HepG2 (cell line): ENCODE measurements at regions of chr1 and their contacts with region 1.

Region 1: DNA sequence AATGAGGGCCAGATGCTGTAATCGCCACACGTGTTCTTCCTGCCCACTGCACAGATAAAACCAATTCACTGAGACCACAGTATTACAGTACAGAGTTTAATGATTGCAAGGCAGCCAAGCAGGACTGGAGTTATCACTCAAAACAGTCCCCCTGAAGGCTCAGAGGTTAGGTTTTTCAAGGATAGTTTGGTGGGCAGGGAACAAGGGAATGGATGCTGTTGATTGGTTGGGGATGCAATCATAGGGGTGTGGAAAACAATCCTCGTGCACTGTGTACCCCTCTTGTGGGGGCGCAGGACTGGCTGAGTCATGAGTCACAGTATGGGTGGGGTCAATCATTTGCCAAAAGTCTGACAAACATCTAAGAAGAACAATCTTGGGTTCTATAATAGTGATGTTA is 12.4 kb upstream of the USP1 start:
- DNase-seq: peak; percentile 76
- ATAC-seq: peak; percentile 84
- H3K4me3 ChIP-seq: peak overlapping the region in 2 of 3 experiments; percentile 25 to 51; a peak in 1 of 6 replicates
- H3K27ac ChIP-seq: peak overlapping the region; percentile 83
- H3K4me1 ChIP-seq: peaks cover 49% of the 10 kb centered on the region
- H3K27me3 ChIP-seq: no peaks in the 10 kb centered on the region
- CTCF ChIP-seq: no peak
- EP300 ChIP-seq: peak in 1 of 2 experiments; percentile 19; a peak in 1 of 4 replicates
- POLR2A ChIP-seq: peak in 1 of 2 experiments; percentile 59; a peak in 1 of 4 replicates
- RAD21 ChIP-seq: no peak

Region 2: DNA sequence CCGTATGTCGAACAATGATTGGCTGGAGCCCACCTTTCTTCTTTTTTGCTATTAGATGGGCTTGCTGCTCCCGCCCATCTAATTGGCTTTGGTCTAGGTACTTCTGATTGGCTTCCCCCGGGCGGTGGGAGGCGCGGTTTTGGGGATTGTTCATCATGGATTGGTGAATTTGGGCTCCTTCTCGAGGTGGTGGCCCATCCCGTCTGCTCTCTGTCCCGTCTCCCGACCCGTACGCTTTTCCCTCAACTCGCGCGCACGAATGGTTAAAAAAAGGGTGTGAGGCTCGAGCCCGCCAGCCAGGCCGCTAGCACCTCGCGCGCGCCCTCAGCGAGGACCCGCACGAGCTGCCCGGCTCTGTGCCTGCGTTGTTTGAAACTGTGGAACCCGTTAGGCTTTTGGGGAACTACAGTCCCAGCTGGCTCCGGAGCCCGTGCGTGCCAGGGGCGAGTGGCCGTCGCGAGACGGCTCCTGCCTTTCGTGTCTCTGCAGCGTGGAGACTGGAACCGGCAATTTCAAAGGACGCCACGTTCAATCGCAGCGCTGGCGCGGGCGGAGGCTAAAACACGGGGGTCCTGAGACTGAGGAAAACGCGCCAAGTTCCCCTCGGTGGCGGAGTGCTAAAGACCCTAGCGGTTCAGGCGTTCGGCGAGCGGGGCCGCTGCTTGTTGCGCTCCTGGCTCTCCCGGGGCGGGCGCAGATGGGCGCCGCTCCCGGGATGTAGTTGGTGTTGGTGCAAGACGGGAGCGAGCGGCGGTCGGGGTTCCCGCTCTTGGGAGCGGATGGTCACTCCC is 12.2 kb after region 1 on chr1 and contains the start of gene USP1:
- CTCF ChIA-PET with region 1: no interaction called
- POLR2A ChIA-PET with region 1: interaction called, 97 read pairs
- in situ Hi-C with region 1: no loop called
- intact Hi-C with region 1: no loop called
- DNase-seq: peak; percentile 100
- ATAC-seq: peak; percentile 93
- H3K4me3 ChIP-seq: peak within 1 kb of the TSS; percentile 89 to 95 (median 93)
- H3K27ac ChIP-seq: peak within 1 kb of the TSS; percentile 100
- H3K4me1 ChIP-seq: peaks cover 33% of the 10 kb centered on the region
- H3K27me3 ChIP-seq: no peaks in the 10 kb centered on the region; a peak in 1 of 5 replicates
- CTCF ChIP-seq: peak; percentile 16; the same call in 1 of the 2 replicates
- EP300 ChIP-seq: peak in 1 of 2 experiments; percentile 34; a peak in 1 of 4 replicates
- POLR2A ChIP-seq: peak; percentile 78 to 86
- RAD21 ChIP-seq: peak; percentile 55
- total RNA-seq, gene USP1: 64.6 and 91.7 TPM in 2 replicates